ENCODE measurements at regions of chr17 and their contacts with region 1.

Region 1: GRCh38 chr17:37567137-37567536 is 42.1 kb downstream of the SYNRG start:
- DNase-seq: no peak
- H3K4me3 ChIP-seq: no peak overlapping the region
- H3K27ac ChIP-seq: no peak overlapping the region
- H3K4me1 ChIP-seq: no peaks in the 10 kb centered on the region
- H3K27me3 ChIP-seq: no peaks in the 10 kb centered on the region
- CTCF ChIP-seq: no peak

Region 2: GRCh38 chr17:35621768-35622167 is 1945.4 kb before region 1 on chr17:
- intact Hi-C with region 1: loop called (anchors 5 kb)
- DNase-seq: no peak
- H3K4me3 ChIP-seq: no peak overlapping the region
- H3K27ac ChIP-seq: no peak overlapping the region
- H3K4me1 ChIP-seq: no peaks in the 10 kb centered on the region
- H3K27me3 ChIP-seq: no peaks in the 10 kb centered on the region
- CTCF ChIP-seq: no peak

Measured in tibial artery (tissue), 4 donors.